Right ventricle myocardium inferior (tissue), 1 donor: ENCODE measurements at regions of chr6 and their contacts with region 1.

Region 1: DNA sequence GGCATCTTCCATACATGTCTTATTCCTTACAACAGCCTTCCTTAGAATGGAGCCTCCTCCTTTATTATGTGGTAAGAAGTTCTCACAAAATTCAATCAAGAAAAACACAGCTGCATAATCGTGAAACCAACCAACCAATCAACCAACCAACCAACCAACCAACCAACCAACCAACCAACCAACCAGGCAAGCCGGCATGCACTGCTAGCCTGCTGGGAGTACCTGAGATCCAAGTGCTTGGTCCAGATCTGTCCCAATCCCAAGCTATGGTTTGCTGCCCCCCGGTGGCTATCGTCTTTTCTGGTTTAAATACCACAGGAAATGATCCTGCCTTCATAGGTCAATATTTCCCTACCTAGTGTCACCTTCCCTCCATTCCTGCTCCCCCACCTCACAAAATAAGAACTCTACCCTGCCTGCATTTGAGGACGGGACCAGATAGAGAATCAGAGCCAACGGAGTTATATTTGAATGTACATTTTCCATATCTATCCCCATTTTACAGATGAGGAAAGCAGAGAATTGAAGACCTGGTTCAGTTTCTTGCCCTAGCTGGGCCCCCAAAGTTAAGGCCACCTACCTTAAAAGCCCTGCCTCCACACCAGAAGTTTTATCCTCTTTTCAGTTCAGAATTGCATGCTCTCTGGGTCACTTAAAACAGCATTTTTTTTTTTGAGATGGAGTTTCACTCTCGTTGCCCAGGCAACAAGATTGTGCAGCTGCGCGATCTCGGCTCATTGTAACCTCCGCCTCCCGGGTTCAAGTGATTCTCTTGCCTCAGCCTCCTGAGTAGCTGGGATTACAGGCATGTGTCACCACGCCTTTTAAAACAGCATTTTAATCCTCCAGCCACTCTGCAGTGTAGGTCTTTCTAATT is 27.1 kb downstream of the RAB44 start:
- DNase-seq: no peak
- ATAC-seq: peak; percentile 64

Region 2: DNA sequence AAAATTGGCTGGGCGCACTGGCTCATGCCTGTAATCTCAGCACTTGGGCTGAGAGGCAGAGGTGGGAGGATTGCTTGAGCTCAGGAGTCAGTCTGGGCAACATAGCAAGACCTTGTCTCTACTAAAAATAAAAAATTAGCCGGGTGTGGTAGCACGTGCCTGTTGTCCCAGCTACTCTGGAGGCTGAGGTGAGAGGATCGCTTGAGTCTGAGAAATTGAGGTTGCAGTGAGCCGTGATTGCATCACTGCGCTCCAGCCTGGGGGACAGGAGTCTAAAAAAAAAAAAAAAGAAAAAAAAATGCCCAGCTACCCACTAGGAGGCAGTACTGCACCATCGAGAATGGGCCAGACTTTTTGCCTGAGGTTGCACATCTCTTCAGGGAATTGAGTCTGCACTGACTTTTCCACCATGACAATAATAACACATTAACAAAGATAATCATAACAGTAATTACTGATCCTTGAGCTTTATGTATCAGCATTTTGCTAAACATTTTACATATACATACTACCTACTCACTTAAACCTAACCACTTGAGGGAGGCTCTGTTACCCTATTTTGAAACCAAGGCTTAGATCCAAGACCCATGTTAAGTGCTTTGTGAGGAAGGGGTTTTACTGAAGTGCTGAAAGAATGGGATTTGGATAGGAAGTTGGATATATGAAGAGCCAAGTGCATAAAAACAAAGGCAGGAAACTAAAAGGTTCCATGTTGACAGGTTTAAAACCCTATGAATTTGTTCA is 109.6 kb before region 1 on chr6:
- intact Hi-C with region 1: loop called (anchors 2 kb)
- DNase-seq: peak; percentile 68
- ATAC-seq: peak; percentile 72

Region 3: DNA sequence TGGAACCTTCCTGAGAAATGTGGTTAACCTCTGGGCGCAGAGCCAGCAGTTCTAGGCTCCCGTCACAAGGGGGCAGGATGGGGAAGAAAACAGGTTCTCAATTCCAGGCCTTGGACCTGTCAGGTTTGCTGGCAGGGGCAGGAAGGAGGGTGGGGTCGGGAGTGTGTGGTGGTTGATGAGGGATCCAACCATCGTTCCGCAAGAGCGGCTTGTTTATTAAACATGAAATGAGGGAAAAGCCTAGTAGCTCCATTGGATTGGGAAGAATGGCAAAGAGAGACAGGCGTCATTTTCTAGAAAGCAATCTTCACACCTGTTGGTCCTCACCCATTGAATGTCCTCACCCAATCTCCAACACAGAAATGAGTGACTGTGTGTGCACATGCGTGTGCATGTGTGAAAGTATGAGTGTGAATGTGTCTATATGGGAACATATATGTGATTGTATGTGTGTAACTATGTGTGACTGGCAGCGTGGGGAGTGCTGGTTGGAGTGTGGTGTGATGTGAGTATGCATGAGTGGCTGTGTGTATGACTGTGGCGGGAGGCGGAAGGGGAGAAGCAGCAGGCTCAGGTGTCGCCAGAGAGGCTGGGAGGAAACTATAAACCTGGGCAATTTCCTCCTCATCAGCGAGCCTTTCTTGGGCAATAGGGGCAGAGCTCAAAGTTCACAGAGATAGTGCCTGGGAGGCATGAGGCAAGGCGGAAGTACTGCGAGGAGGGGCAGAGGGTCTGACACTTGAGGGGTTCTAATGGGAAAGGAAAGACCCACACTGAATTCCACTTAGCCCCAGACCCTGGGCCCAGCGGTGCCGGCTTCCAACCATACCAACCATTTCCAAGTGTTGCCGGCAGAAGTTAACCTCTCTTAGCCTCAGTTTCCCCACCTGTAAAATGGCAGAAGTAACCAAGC is 100.9 kb before region 1 on chr6:
- intact Hi-C with region 1: loop called (anchors 2 kb)
- DNase-seq: peak; percentile 90
- ATAC-seq: peak; percentile 33

Region 4: GRCh38 chr6:36703982-36704381 is 20.8 kb before region 1 on chr6:
- intact Hi-C with region 1: no loop called
- DNase-seq: no peak
- ATAC-seq: no peak

Region 5: DNA sequence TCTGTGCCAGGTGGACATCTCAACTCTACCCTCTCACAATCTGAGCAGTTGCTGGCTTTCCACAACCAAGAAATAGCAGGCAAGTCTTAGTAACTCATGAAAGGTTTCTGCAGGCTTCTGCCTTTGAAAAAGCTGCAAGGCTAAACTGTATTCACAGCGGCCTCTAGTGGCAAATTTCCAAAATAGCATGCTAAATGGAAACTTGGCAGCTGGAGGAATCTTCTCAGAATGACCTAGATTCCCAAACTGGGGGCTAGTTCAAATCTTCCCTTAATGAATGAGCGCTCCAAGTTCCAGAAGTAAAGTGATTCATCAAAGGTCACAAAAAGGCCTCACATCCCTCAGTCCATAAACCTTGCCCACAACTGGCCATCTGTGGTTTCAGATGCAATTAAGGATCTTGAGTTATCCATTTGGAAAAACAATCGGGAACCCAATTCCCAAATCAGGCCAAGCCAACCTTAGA is 126.4 kb after region 1 on chr6:
- intact Hi-C with region 1: no loop called
- DNase-seq: no peak
- ATAC-seq: peak; percentile 30

Region 6: GRCh38 chr6:37018198-37019064 is 293.7 kb after region 1 on chr6:
- intact Hi-C with region 1: no loop called
- DNase-seq: peak; percentile 92
- ATAC-seq: peak; percentile 97

Region 7: DNA sequence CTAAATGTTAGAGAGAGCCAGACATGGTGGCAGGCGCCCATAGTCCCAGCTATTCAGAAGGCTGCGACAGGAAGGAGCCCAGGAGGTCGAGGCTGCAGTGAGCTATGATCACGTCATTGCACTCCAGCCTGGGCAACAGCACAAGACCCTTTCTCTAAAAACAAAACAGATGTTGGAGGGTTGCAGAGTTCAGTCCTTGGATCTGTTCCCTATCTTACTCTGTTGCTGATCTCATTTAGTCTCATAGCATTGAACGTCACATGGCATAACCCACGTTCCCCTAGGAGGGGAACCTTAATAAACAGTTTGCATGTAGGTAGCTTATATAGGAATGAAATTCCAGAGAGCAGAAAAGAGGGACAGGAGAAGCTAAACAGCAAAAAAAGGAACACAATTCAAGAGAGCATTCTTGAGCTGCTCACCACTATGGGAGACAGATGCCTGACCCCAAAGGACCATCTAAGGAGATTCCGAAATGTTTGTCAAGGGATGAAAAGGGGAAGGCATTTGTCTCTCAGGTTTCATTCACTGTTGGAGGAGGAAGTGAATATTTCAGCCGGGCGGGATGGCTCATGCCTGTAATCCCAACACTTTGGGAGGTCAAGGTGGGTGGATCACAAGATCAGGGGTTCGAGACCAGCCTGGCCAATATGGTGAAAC is 390.6 kb after region 1 on chr6:
- intact Hi-C with region 1: no loop called
- DNase-seq: no peak
- ATAC-seq: peak; percentile 48